ENCODE measurements at regions of chr21 and their contacts with region 1.

Region 1: GRCh38 chr21:36113647-36114428 is 21.0 kb upstream of the CBR3 start:
- DNase-seq: no peak
- ATAC-seq: no peak
- H3K4me3 ChIP-seq: peak overlapping the region in 2 of 5 experiments; percentile 8 to 16
- H3K4me3 Mint-ChIP-seq: peak overlapping the region; percentile 79
- H3K27ac ChIP-seq: peak overlapping the region in 1 of 2 donors; percentile 20
- H3K27ac Mint-ChIP-seq: peak overlapping the region; percentile 87
- H3K4me1 ChIP-seq: peaks cover 15 to 29% of the 10 kb centered on the region in 2 donors
- H3K4me1 Mint-ChIP-seq: peaks cover 24% of the 10 kb centered on the region
- H3K27me3 ChIP-seq: no peaks in the 10 kb centered on the region
- H3K27me3 Mint-ChIP-seq: no peaks in the 10 kb centered on the region
- CTCF ChIP-seq: no peak

Region 2: DNA sequence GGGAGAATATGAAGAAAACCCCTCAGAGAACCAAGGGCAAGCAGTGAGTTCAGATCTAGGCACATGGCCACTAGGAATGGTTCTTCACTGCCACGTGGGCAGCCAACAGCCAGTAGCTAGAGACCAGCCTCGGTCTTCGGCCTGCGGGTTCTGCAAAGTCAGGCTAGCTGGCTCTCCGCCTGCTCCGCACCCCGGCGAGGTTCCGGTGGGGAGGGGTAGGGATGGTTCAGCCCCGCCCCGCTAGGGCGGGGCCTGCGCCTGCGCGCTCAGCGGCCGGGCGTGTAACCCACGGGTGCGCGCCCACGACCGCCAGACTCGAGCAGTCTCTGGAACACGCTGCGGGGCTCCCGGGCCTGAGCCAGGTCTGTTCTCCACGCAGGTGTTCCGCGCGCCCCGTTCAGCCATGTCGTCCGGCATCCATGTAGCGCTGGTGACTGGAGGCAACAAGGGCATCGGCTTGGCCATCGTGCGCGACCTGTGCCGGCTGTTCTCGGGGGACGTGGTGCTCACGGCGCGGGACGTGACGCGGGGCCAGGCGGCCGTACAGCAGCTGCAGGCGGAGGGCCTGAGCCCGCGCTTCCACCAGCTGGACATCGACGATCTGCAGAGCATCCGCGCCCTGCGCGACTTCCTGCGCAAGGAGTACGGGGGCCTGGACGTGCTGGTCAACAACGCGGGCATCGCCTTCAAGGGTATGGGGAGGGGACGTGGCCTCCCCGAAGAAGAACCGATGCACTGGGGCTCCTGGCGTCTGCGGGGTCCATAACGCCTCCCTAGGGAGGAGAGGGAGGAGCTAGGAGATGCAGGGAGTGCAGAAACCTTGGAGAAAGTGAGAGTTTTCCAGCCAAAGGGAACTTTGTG is 43.9 kb before region 1 on chr21 and contains the start of gene CBR1:
- CTCF ChIA-PET with region 1: interaction called, 4 read pairs
- POLR2A ChIA-PET with region 1: interaction called, 5 read pairs
- intact Hi-C with region 1: loop called (anchors 2 kb)
- DNase-seq: peak; percentile 91
- ATAC-seq: peak; percentile 98
- H3K4me3 ChIP-seq: peak within 1 kb of the TSS; percentile 0 to 77 (median 71)
- H3K4me3 Mint-ChIP-seq: peak within 1 kb of the TSS; percentile 94
- H3K27ac ChIP-seq: peak within 1 kb of the TSS; percentile 45 to 51
- H3K27ac Mint-ChIP-seq: peak within 1 kb of the TSS; percentile 87
- H3K4me1 ChIP-seq: peaks cover 11 to 20% of the 10 kb centered on the region in 2 donors
- H3K4me1 Mint-ChIP-seq: peaks cover 31% of the 10 kb centered on the region
- H3K27me3 ChIP-seq: no peaks in the 10 kb centered on the region
- H3K27me3 Mint-ChIP-seq: no peaks in the 10 kb centered on the region
- CTCF ChIP-seq: no peak
- total RNA-seq, gene CBR1: 13.5 and 14.4 TPM in 2 replicates

Region 3: DNA sequence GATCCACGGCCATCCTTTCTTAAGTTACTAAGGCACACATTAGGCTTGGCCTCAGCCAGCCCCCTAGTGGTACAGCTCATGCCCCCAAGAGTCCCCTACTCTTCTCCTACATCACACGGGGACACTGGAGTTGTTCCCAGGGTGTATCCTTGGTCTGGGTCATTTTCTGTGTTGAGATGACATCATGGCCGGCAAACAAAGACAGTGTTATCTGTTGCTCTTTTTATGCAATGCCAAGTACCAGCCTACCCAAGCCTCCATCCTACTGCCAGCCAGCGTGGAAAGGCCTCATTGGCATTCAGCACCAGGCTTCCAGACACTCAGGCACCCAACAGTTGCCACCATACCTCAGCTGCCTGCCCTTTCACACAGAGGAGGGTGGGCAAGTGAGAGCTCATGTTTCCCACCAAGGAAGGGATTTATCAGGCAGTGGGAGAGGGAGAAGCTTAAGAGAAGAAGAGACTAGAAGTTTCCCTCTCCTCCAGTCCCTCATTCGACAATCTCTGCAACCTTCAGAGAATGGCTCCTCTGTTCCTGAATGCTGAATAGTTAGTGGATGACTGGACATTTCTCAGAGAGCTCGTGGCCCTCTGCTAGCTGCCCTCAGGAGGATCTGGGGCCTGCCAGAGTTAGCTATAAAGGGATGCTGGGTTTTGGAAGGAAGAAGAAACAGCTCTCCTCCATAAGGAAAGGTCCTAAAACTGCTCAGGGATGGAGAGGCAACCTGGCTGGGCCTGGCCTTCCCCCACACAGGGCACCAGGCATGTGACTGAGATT is 26.3 kb before region 1 on chr21:
- CTCF ChIA-PET with region 1: interaction called, 10 read pairs
- POLR2A ChIA-PET with region 1: no interaction called
- intact Hi-C with region 1: no loop called
- DNase-seq: no peak
- ATAC-seq: no peak
- H3K4me3 ChIP-seq: no peak overlapping the region
- H3K4me3 Mint-ChIP-seq: no peak overlapping the region
- H3K27ac ChIP-seq: no peak overlapping the region
- H3K27ac Mint-ChIP-seq: no peak overlapping the region
- H3K4me1 ChIP-seq: no peaks in the 10 kb centered on the region
- H3K4me1 Mint-ChIP-seq: no peaks in the 10 kb centered on the region
- H3K27me3 ChIP-seq: no peaks in the 10 kb centered on the region
- H3K27me3 Mint-ChIP-seq: no peaks in the 10 kb centered on the region
- CTCF ChIP-seq: no peak

Region 4: GRCh38 chr21:36135391-36136102 is 21.7 kb after region 1 on chr21:
- CTCF ChIA-PET with region 1: interaction called, 13 read pairs
- POLR2A ChIA-PET with region 1: interaction called, 11 read pairs
- intact Hi-C with region 1: no loop called
- DNase-seq: peak; percentile 74
- ATAC-seq: peak; percentile 86
- H3K4me3 ChIP-seq: peak overlapping the region; percentile 71 to 89 (median 76)
- H3K4me3 Mint-ChIP-seq: peak overlapping the region; percentile 90
- H3K27ac ChIP-seq: peak overlapping the region; percentile 41 to 62
- H3K27ac Mint-ChIP-seq: peak overlapping the region; percentile 90
- H3K4me1 ChIP-seq: peaks cover 20 to 27% of the 10 kb centered on the region in 2 donors
- H3K4me1 Mint-ChIP-seq: peaks cover 33% of the 10 kb centered on the region
- H3K27me3 ChIP-seq: peaks cover 0 to 3% (median 0%) of the 10 kb centered on the region in 4 experiments
- H3K27me3 Mint-ChIP-seq: no peaks in the 10 kb centered on the region
- CTCF ChIP-seq: no peak

Measured in B cell (primary cell).